ENCODE measurements at regions of chr10 and their contacts with region 1.

Region 1: DNA sequence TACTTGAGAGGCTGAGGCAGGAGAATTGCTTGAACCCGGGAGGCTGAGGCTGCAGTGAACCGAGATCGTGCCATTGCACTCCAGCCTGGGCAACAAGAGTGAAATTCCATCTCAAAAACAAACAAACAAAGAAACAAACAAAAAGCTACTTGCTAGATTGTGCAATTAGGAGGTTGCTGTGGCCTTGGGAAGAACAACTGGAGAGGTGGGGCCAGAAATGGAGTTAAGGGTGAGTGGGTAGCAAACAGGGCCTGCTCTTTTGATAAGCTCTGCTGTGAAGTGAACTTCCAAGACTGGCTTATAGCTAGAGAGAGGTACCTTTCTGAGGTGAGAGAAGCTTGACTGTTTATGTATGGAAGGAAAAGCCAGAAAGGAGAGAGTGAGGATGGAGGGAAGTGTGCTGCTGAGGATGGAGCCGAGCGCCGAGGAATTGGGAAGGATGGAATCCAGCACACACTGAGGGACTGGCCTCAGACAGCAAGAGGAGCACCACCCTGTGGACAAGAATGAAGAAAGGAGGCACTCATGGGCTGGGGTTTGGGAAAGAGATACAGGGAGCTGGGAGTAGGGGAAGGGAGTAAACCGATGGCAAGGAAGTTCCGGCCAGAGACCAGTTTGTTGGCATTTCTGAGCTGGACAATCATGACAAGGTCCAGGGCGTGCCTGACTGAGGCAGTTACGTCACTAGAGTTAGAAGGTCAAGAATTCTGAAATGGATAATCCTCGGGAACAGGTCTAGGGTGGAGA is 7.0 kb upstream of the RPEL1 start:
- DNase-seq: no peak
- ATAC-seq: peak; percentile 76

Region 2: DNA sequence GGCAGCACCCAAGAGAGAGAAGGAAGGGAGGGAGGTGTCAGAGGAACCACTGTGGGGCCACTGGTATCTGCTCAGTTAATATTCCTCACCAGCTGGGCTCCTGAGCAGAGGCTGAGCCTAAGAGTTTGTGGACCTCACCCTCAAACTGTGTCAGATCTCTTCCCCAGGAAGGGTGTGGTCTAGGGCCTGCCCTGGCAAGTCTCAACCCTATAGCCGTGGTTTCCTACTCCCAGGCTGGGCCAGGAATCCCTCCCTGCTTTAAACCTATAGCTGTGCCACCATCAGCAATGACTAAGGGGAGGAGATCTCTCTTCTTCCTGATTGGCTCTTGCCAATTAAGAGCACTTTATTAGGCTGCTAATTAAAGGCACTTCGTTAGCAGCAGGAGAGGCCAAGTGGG is 1680.5 kb before region 1 on chr10:
- intact Hi-C with region 1: no loop called
- DNase-seq: no peak
- ATAC-seq: no peak

Region 3: GRCh38 chr10:103192451-103193106 is 46.1 kb before region 1 on chr10:
- intact Hi-C with region 1: loop called (anchors 5 kb)
- DNase-seq: peak; percentile 92
- ATAC-seq: peak; percentile 77